Endothelial cell of umbilical vein (primary cell): ENCODE measurements at regions of chr3 and their contacts with region 1.

Region 1: DNA sequence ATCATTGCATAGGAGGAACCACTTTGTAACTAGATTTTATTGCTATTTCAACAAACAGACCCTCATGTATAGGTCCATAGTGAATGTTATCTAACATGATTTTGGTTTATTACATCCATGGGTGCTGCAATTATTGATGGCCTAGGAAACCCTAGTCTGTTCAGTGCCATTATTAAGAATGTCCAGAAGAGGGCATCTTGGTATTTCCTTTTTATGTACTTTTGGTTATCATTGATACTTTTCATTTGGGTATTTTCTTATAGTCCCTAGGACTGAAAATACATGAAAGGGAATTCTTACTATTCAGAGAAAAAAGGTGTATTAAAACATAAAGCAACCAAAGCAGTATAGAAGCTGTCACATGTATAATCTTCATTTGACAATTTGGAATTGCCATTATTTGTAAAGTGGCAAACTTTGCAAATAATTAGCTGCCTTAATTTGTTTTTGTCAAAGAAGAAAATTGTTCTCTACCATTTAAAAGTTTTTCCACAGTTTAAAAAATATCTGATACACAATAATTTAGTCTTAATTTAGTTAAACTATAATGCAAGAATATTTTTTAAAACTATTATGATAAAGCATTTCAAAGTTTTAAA is 48.7 kb downstream of the CNOT10 start:
- DNase-seq: peak; percentile 54
- H3K4me3 ChIP-seq: no peak overlapping the region
- H3K27ac ChIP-seq: no peak overlapping the region
- H3K4me1 ChIP-seq: peaks cover 2% of the 10 kb centered on the region
- H3K27me3 ChIP-seq: no peaks in the 10 kb centered on the region
- CTCF ChIP-seq: peak; percentile 29 to 38
- POLR2A ChIP-seq: no peak

Region 2: DNA sequence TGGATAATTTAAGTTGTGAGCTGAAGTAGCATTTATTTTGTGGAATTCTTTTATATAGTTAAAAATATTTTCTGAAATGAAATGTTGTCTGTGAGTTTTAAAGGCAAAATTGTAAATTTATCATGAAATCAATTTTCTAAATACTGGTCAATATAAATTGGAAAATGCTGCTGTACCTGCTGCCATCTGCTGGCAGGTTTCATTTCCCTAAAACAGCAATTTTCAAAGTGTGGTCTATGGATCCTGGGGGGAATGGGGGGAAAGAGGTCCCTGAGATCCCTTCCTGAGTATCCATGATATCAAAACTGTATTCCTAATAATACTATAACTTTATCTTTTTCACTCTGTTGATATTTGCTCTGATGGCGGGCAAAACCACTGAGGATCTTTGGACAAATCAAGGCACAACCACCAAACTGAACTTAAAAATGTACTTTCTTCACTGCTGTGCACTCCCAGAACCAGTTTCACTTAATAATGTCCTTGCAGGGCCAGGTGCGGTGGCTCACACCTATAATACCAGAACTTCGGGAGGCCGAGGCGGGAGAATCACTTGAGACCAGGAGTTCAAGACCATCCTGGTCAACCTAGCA is 200.5 kb after region 1 on chr3:
- CTCF ChIA-PET with region 1: interaction called, 40 read pairs
- POLR2A ChIA-PET with region 1: no interaction called
- dilution Hi-C with region 1: no loop called
- intact Hi-C with region 1: loop called (anchors 1 kb)
- DNase-seq: peak; percentile 22
- H3K4me3 ChIP-seq: no peak overlapping the region
- H3K27ac ChIP-seq: no peak overlapping the region
- H3K4me1 ChIP-seq: no peaks in the 10 kb centered on the region
- H3K27me3 ChIP-seq: peaks cover 0 to 1% of the 10 kb centered on the region in 2 experiments
- CTCF ChIP-seq: peak; percentile 52 to 61
- POLR2A ChIP-seq: no peak